Activated CD4-positive, alpha-beta memory T cell treated with anti-CD3 and anti-CD28 coated beads for 36 hours (primary cell): ENCODE measurements at regions of chr7 and their contacts with region 1.

Region 1: GRCh38 chr7:105149827-105150226 is 135.8 kb downstream of the KMT2E start:
- DNase-seq: no peak
- H3K4me3 Mint-ChIP-seq: no peak overlapping the region
- H3K27ac Mint-ChIP-seq: peak overlapping the region; percentile 14
- H3K4me1 Mint-ChIP-seq: peaks cover 26% of the 10 kb centered on the region
- H3K27me3 Mint-ChIP-seq: no peaks in the 10 kb centered on the region

Region 2: GRCh38 chr7:104795616-104796398 is 354.0 kb before region 1 on chr7:
- CTCF ChIA-PET with region 1: no interaction called
- POLR2A ChIA-PET with region 1: no interaction called
- intact Hi-C with region 1: no loop called
- DNase-seq: no peak
- H3K4me3 Mint-ChIP-seq: no peak overlapping the region
- H3K27ac Mint-ChIP-seq: no peak overlapping the region
- H3K4me1 Mint-ChIP-seq: no peaks in the 10 kb centered on the region
- H3K27me3 Mint-ChIP-seq: peaks cover 11% of the 10 kb centered on the region

Region 3: DNA sequence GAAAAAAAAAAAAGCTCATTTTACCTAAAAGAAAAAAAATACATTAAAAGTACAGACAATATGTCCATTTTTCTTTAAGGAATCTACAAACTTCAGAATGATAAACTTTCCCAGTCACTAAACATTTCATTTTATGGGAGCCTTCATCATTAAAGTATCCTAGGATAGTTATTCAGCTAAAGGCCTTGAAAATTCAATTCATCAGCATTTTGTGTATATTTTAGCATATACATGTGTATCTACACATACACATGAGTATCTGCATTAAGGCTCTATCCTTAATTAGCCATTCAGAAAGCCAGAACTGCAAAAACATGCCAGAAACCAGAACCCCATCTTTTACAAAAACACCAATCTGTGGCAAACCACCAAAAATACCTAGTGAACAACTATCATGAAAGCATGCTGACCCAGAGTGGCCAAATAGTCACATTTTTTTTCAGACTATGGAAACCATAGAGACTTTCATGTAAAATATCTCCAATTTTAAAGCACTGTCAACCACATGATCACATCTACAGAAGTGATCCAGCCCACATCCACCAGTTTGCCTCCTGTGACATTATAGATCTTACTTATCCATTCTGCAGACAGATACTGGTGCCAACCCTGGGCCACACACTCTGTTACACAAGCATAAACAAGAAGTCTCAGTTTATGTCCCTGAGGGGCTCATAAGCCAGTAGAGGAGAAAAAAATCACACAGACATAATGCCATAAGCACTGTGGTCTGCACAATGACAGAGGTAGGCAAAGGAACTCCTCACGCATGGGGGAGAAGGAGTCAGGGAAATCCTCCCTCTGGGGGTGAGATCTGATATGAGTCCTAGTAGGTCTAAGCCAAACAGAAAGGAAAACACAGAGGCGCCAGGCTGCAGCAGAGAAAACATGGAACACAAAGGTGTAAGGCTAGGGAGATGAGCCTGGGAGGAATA is 159.7 kb after region 1 on chr7:
- CTCF ChIA-PET with region 1: no interaction called
- POLR2A ChIA-PET with region 1: no interaction called
- intact Hi-C with region 1: no loop called
- DNase-seq: peak; percentile 31
- H3K4me3 Mint-ChIP-seq: no peak overlapping the region
- H3K27ac Mint-ChIP-seq: peak overlapping the region; percentile 4
- H3K4me1 Mint-ChIP-seq: peaks cover 64% of the 10 kb centered on the region
- H3K27me3 Mint-ChIP-seq: no peaks in the 10 kb centered on the region

Region 4: DNA sequence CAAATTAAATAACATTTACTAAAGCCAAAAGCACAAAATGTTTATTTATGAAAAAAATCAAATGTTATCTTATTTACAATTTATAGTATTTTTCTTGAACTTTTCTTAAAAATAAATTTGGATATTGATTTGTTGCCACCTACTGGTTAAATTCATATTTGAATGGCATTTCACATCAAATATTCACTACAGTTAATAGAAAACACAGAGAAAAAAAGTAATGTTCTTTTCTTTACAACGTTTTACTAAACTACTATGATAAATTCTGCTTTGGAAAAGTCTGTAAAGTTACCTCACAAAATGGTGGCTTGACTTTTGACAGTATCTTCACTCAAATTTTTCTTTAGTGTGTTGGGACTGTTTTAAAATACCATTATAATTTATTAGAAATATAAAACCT is 186.2 kb after region 1 on chr7:
- CTCF ChIA-PET with region 1: interaction called, 9 read pairs
- POLR2A ChIA-PET with region 1: no interaction called
- intact Hi-C with region 1: loop called (anchors 5 kb)
- DNase-seq: no peak
- H3K4me3 Mint-ChIP-seq: no peak overlapping the region
- H3K27ac Mint-ChIP-seq: no peak overlapping the region
- H3K4me1 Mint-ChIP-seq: peaks cover 19% of the 10 kb centered on the region
- H3K27me3 Mint-ChIP-seq: no peaks in the 10 kb centered on the region

Region 5: DNA sequence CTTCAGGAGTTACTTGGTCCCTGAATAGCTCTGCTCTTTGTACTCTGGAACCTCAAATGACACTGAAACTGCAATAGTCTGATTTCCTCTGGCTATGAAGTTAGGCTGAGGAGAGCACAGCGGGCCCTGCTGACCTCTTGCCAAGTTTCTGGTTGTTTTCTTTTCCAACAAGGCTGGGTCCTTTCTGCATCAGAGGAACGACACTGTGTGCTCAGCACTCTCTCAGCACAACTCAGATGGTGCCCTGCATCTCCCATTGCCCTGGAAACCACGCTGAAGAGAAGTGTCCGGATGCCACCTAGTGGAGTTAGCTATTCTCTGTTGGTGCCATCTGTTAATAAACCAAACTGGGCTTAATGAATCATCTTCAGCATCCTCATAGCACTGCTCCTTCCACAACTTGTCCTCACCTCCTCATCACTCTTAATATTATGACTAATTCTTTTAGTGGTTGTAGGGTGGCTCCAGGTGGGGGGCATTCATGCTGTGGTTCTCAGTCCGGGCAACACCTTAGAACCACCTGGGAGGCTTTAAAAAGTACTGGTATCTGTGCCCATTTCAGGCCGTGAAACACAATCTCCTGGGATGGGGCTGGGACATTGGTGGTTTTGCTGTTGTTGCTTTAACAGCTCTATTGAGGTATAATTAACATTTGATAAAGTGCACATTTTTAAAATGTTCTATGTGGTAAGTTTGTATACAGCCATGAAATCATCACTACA is 439.7 kb after region 1 on chr7:
- CTCF ChIA-PET with region 1: interaction called, 3 read pairs
- POLR2A ChIA-PET with region 1: interaction called, 3 read pairs
- intact Hi-C with region 1: loop called (anchors 5 kb)
- DNase-seq: peak; percentile 75
- H3K4me3 Mint-ChIP-seq: no peak overlapping the region
- H3K27ac Mint-ChIP-seq: no peak overlapping the region
- H3K4me1 Mint-ChIP-seq: peaks cover 5% of the 10 kb centered on the region
- H3K27me3 Mint-ChIP-seq: no peaks in the 10 kb centered on the region